ENCODE measurements at regions of chr13 and their contacts with region 1.

Region 1: GRCh38 chr13:42048682-42049453 is 420 bp downstream of the DGKH start:
- DNase-seq: peak; percentile 76
- H3K4me3 Mint-ChIP-seq: peak overlapping the region; percentile 93
- H3K27ac Mint-ChIP-seq: peak overlapping the region; percentile 51
- H3K4me1 Mint-ChIP-seq: peaks cover 6% of the 10 kb centered on the region
- H3K27me3 Mint-ChIP-seq: no peaks in the 10 kb centered on the region
- CTCF ChIP-seq: peak; percentile 17

Region 2: DNA sequence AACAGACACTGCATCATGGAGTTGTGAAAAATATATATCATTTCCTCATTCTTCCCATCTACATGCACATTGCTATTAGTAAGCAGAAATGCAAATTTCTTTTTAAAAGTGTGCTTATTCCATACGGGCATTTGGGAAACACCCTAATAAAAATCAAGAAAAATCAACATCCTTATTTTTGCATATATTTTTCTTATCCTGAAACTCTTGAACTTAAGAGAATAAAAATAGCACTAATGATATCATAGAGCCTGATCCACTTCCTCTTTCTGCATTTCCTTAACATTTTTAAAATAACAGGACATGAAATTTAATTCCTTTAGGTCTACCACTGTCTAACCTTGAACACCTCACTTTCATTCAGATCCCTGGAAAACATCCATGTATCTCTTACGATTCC is 211.2 kb before region 1 on chr13:
- CTCF ChIA-PET with region 1: no interaction called
- POLR2A ChIA-PET with region 1: no interaction called
- intact Hi-C with region 1: no loop called
- DNase-seq: no peak
- H3K4me3 Mint-ChIP-seq: no peak overlapping the region
- H3K27ac Mint-ChIP-seq: no peak overlapping the region
- H3K4me1 Mint-ChIP-seq: peaks cover 5% of the 10 kb centered on the region
- H3K27me3 Mint-ChIP-seq: no peaks in the 10 kb centered on the region
- CTCF ChIP-seq: no peak

Region 3: DNA sequence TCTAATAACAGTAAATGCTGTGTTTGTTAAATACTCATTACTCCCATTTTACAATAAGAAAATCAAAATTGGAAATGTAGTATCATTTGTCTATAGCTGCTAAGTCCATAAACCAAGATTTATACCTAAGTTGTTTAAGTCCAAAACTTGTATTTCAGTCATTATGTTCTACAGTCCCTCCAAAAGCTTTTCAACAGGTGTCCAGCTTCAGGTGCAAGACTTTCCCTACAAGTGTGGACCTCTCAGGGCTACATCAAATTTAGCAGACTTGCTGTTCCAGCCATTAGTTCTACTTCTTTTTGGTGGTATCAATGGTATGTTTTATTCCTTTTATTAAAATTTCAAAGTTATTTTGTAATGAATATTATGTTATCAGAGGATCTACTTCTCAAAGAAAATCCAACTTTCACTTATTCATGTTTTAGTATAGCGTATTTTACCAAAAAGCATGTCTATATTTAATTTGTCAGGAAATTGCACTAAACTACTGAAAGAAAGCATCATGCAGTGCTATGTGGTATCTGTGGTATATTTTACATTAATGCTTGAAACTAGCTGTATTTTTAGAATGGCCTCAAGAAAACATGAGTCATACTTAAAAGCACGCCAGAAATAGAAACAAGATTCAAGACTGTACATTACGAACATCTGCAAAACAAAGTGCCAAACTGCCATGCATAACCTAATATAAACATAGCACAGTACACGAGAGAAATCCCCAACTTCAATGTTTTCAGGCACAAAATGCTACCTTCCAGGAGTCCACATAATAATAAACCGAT is 132.5 kb before region 1 on chr13:
- CTCF ChIA-PET with region 1: no interaction called
- POLR2A ChIA-PET with region 1: interaction called, 18 read pairs
- intact Hi-C with region 1: no loop called
- DNase-seq: peak; percentile 75
- H3K4me3 Mint-ChIP-seq: peak overlapping the region; percentile 41
- H3K27ac Mint-ChIP-seq: peak overlapping the region; percentile 90
- H3K4me1 Mint-ChIP-seq: peaks cover 17% of the 10 kb centered on the region
- H3K27me3 Mint-ChIP-seq: no peaks in the 10 kb centered on the region
- CTCF ChIP-seq: no peak

Region 4: GRCh38 chr13:42028113-42028799 is 20.6 kb before region 1 on chr13:
- CTCF ChIA-PET with region 1: interaction called, 5 read pairs
- POLR2A ChIA-PET with region 1: interaction called, 33 read pairs
- intact Hi-C with region 1: no loop called
- DNase-seq: no peak
- H3K4me3 Mint-ChIP-seq: no peak overlapping the region
- H3K27ac Mint-ChIP-seq: no peak overlapping the region
- H3K4me1 Mint-ChIP-seq: peaks cover 29% of the 10 kb centered on the region
- H3K27me3 Mint-ChIP-seq: no peaks in the 10 kb centered on the region
- CTCF ChIP-seq: no peak

Region 5: GRCh38 chr13:42075517-42075916 is 26.6 kb after region 1 on chr13:
- CTCF ChIA-PET with region 1: interaction called, 3 read pairs
- POLR2A ChIA-PET with region 1: interaction called, 10 read pairs
- intact Hi-C with region 1: no loop called
- DNase-seq: no peak
- H3K4me3 Mint-ChIP-seq: no peak overlapping the region
- H3K27ac Mint-ChIP-seq: no peak overlapping the region
- H3K4me1 Mint-ChIP-seq: peaks cover 10% of the 10 kb centered on the region
- H3K27me3 Mint-ChIP-seq: no peaks in the 10 kb centered on the region
- CTCF ChIP-seq: no peak

Region 6: DNA sequence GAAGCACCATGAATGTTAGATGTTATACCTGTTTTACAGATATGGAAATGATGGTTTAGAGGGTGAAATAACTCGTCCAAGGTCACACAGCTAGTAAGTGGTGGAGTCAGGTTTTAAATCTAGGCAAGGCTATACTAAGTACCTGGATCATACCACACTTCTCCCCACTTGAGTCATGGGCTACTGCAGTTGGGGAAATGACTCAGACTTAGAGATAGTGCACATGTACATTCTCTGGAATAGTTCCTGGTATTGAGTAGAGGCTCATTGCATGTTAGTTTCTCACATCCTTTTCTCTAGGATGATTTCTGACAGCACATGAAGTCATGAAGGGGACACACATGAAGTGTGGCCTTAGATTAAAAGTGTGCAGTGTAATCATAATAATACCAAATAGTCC is 448.9 kb after region 1 on chr13:
- CTCF ChIA-PET with region 1: no interaction called
- POLR2A ChIA-PET with region 1: no interaction called
- intact Hi-C with region 1: no loop called
- DNase-seq: peak; percentile 78
- H3K4me3 Mint-ChIP-seq: no peak overlapping the region
- H3K27ac Mint-ChIP-seq: no peak overlapping the region
- H3K4me1 Mint-ChIP-seq: peaks cover 13% of the 10 kb centered on the region
- H3K27me3 Mint-ChIP-seq: no peaks in the 10 kb centered on the region
- CTCF ChIP-seq: no peak

Measured in MCF 10A (cell line).